Psoas muscle (tissue), 8 donors: ENCODE measurements at regions of chr2 and their contacts with region 1.

Region 1: DNA sequence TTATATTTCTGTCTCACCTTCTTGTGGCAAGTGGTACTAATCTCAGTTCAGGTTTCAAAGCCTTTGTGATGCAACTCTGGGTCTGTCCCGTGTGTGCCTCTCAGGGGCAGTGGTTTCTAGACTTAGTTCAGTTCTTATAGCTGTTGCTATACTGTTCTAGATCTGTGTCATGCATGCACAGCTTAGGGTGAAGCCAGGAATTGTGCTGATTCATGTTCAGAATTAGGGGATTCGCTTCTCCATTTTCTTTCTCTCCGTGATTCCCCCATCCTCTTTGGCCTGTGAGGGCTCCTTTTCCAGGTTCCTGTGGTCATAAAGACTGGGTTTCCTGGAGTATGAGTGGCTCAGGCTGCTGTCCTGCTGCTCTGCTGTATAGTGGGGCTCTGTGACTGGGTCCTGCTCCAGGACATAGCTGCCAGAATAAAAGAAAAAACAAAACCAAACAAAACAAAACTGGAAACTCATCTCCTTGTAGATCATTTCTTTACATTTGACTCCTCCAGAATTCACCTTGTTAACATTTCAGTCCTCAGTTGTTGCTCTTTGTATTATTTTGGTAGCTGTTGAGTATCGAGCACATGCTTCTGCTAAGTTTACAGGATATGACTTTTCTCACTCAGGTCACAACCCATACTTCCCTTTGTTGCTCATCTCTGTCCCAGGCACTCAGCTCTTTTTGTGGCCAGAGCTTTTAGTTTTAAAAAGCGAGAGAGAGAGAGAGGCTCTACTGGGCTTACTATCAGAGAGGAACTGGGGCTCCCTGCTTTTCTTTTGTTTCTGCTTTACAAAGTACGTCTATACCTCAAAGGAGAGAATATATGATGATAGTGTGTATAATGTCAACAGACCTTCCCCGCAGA is 34.2 kb downstream of the CERS6 start:
- DNase-seq: no peak
- ATAC-seq: peak; percentile 81 to 94 (median 88)
- H3K4me3 ChIP-seq: peak overlapping the region; percentile 44
- H3K27ac ChIP-seq: peak overlapping the region; percentile 78
- H3K4me1 ChIP-seq: peaks cover 20% of the 10 kb centered on the region
- H3K27me3 ChIP-seq: no peaks in the 10 kb centered on the region
- CTCF ChIP-seq: no peak

Region 2: DNA sequence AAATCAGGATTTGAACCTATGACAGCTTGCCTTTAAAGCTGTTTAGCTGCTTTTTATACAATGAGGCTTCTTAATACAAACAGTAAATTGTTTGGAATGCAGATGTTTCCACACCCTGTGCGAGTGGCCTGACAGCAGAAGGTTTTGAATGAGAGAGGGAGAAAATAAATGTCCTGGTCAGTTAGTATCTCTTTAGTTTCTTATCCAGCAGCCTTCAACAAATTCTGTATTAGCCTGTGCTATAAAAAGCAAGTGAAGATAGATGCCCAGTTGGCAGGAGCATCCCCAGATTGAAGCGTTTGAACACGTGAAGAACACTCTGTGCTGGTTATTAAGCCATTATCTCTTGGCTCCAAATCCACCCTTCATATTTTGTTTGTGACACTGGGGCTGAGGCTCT is 36.4 kb after region 1 on chr2:
- intact Hi-C with region 1: loop called in 1 of 2 experiments (anchors 5 kb)
- DNase-seq: no peak
- ATAC-seq: peak; percentile 75 to 95 (median 90)
- H3K4me3 ChIP-seq: peak overlapping the region; percentile 9
- H3K27ac ChIP-seq: peak overlapping the region; percentile 75
- H3K4me1 ChIP-seq: peaks cover 70% of the 10 kb centered on the region
- H3K27me3 ChIP-seq: no peaks in the 10 kb centered on the region
- CTCF ChIP-seq: no peak

Region 3: DNA sequence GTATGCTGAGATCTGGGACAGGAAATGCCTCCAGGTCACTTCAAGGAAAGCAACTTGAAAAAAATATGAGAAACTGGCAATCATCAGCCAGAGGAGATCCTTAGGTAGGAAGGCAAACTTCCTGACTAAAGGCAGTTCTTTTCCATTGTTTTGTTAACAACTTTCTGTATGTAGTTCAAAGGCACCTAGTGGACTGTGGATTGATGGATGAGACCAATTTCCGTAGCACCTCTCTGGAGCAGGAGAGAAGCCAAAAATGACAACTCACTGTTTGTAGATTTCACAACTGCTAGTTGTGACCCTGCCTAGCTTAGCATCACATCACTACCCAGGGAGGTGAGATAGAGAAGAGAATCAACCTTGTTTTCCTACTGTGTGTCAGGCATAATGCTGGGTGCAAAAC is 290.4 kb after region 1 on chr2:
- intact Hi-C with region 1: no loop called
- DNase-seq: no peak
- ATAC-seq: no peak
- H3K4me3 ChIP-seq: no peak overlapping the region
- H3K27ac ChIP-seq: no peak overlapping the region
- H3K4me1 ChIP-seq: no peaks in the 10 kb centered on the region
- H3K27me3 ChIP-seq: no peaks in the 10 kb centered on the region
- CTCF ChIP-seq: no peak